GM10248 (cell line): ENCODE measurements at regions of chr4 and their contacts with region 1.

Region 1: DNA sequence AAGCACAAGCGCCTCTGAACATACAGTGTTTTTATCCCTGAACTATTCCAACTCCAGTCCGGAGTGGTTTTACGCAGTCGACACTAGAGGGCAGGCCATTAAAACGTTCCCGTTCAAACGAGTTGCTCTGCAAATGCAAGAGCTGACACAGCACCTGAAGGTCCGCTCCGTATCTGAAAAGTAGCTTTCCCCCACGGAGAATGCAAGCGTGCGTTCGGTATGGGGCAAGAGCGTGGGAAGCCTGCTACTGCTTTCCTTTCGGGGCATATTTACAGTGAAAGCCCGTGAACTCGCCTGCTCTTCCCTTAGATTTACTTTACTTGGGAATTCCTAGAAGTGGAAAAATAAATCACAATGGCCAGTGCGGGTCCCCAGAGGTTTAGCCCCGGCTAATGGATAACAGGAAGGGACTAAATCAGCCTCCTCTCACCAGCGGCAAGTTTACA is 190.8 kb downstream of the TSPAN5 start:
- DNase-seq: peak; percentile 76
- CTCF ChIP-seq: peak; percentile 81

Region 2: GRCh38 chr4:98411731-98412130 is 55.9 kb before region 1 on chr4:
- CTCF ChIA-PET with region 1: no interaction called
- POLR2A ChIA-PET with region 1: no interaction called
- DNase-seq: no peak
- CTCF ChIP-seq: no peak

Region 3: DNA sequence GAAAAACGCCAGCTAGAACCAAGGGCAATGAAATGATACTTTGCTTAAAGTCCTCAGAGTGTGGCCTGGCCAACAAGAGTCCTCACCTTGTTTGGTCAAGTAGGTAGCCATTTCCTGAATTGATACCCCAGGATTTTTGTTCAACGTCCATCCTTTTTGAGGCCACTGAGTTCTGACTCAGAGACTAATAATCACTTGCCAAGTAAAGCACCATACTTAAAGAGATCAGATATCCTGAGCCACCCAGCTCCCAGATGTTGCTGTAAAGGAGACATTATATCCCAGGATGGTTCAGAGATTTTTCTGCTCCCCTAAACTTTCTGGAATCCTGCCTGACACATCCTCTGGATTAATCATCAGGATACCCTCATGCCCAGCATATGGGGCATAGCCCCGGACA is 15.6 kb before region 1 on chr4:
- CTCF ChIA-PET with region 1: interaction called, 22 read pairs
- POLR2A ChIA-PET with region 1: no interaction called
- DNase-seq: no peak
- CTCF ChIP-seq: no peak

Region 4: GRCh38 chr4:98482847-98483806 is 15.5 kb after region 1 on chr4:
- CTCF ChIA-PET with region 1: interaction called, 37 read pairs
- POLR2A ChIA-PET with region 1: no interaction called
- DNase-seq: peak; percentile 66
- CTCF ChIP-seq: no peak

Region 5: DNA sequence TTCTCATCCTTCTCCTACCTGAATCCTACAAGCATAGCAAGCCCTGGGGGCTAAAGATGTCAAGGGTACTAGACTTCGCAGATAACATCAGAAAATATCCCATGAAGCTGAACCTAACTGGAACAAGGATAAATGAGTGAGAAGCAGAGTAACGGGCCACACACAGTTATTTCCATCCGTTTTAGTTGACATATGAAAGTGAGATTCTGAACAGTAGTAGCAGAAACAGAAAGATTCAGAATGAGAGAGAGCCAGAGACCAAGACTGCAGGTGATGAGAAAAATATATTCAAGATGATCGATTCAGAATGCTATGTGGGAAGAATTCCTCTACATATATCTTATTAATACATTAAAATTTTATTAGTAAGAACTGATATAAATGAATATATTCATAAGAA is 25.6 kb after region 1 on chr4:
- CTCF ChIA-PET with region 1: interaction called, 14 read pairs
- POLR2A ChIA-PET with region 1: no interaction called
- DNase-seq: peak; percentile 35
- CTCF ChIP-seq: no peak

Region 6: GRCh38 chr4:98586962-98587354 is 119.3 kb after region 1 on chr4:
- CTCF ChIA-PET with region 1: no interaction called
- POLR2A ChIA-PET with region 1: no interaction called
- DNase-seq: no peak
- CTCF ChIP-seq: no peak

Region 7: GRCh38 chr4:99405433-99406115 is 937.9 kb after region 1 on chr4:
- CTCF ChIA-PET with region 1: interaction called, 10 read pairs
- POLR2A ChIA-PET with region 1: no interaction called
- DNase-seq: peak; percentile 16
- CTCF ChIP-seq: peak; percentile 90